Activated T-helper 1 cell treated with anti-CD3 and anti-CD28 coated beads, Interleukin-12 subunit alpha, Interleukin-12 subunit beta, Interleukin-2, Interleukin-4 antibody, amounts not matched to agents 30 ng/mL and 10 ng/mL and 1 ng/mL, durations not matched to agents 14 hours and 24 hours and 36 hours (primary cell): ENCODE measurements at regions of chr6 and their contacts with region 1.

Region 1: DNA sequence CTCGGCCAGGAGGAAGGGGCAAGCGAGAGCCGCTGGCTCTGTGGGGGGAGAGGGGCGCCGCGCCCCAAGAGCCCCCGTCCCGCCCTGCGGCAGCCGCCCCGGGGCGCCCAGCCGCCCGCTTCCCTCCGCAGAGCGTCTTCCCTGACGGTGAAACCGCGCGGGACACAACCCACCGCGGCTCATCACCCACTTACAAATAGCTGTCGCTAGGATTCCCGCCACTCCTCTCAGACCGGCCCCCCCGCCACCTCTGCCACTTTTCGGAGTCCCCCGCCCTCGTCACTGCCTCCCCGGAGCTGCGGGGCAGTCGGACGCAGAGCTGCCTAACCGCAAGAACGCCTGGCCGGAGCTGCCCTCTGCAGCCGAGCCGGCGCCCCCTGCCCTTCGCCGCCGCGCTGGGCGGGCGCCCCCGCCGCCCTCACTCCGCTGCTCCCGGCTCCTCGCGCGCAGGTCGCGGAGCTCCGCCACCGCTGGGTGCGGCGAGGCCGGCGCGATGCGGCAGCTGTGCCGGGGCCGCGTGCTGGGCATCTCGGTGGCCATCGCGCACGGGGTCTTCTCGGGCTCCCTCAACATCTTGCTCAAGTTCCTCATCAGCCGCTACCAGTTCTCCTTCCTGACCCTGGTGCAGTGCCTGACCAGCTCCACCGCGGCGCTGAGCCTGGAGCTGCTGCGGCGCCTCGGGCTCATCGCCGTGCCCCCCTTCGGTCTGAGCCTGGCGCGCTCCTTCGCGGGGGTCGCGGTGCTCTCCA is at the start of gene SLC35D3:
- DNase-seq: no peak
- H3K4me3 Mint-ChIP-seq: peak within 1 kb of the TSS; percentile 75
- H3K27ac Mint-ChIP-seq: no peak within 1 kb of the TSS
- H3K4me1 Mint-ChIP-seq: peaks cover 15% of the 10 kb centered on the region
- H3K27me3 Mint-ChIP-seq: peaks cover 62% of the 10 kb centered on the region
- total RNA-seq, gene SLC35D3: not detected in 2 replicates

Region 2: DNA sequence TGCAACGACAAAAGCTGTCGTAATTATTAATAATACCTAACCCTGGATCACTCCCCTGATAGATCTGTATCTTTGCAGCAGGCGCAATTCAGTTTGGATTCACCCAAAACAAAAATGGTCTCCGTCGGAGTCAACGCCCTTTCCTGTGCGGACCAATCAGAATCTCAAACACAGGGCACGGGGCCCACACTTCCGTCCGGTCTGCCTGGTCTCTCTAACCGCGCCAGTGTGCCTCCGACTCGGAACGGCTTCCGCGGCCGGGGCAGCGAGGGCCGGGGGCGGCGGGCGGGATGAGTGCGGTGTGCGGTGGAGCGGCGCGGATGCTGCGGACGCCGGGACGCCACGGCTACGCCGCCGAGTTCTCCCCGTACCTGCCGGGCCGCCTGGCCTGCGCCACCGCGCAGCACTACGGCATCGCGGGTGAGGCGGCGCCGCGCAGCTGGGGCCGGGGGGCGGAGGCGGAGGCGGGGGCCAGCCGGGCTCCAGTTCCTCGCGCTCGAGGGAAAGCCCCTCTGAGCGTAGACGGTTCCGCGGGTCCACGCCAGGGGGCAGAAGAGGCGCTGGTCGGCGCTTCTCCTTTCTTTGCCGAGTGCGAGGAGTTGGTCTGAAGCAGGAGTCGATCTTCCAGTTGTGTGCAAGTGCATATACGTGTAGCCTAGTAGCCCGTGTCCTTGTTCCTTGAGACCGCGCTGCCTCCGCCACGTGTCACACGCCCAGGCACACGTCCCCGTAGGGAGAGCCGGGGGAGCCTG is 99.6 kb before region 1 on chr6 and contains the start of gene PEX7:
- intact Hi-C with region 1: loop called (anchors 2 kb)
- DNase-seq: peak; percentile 85
- H3K4me3 Mint-ChIP-seq: peak within 1 kb of the TSS; percentile 91
- H3K27ac Mint-ChIP-seq: peak within 1 kb of the TSS; percentile 92
- H3K4me1 Mint-ChIP-seq: peaks cover 12% of the 10 kb centered on the region
- H3K27me3 Mint-ChIP-seq: peaks cover 6% of the 10 kb centered on the region
- total RNA-seq, gene PEX7: 3.7 and 4.2 TPM in 2 replicates

Region 3: GRCh38 chr6:136846046-136846445 is 76.1 kb before region 1 on chr6:
- intact Hi-C with region 1: loop called (anchors 2 kb)
- DNase-seq: no peak
- H3K4me3 Mint-ChIP-seq: no peak overlapping the region
- H3K27ac Mint-ChIP-seq: no peak overlapping the region
- H3K4me1 Mint-ChIP-seq: no peaks in the 10 kb centered on the region
- H3K27me3 Mint-ChIP-seq: no peaks in the 10 kb centered on the region

Region 4: GRCh38 chr6:136945711-136946121 is 23.6 kb after region 1 on chr6:
- intact Hi-C with region 1: no loop called
- DNase-seq: no peak
- H3K4me3 Mint-ChIP-seq: no peak overlapping the region
- H3K27ac Mint-ChIP-seq: no peak overlapping the region
- H3K4me1 Mint-ChIP-seq: no peaks in the 10 kb centered on the region
- H3K27me3 Mint-ChIP-seq: peaks cover 21% of the 10 kb centered on the region

Region 5: GRCh38 chr6:137489046-137490005 is 567.2 kb after region 1 on chr6:
- intact Hi-C with region 1: loop called (anchors 2 kb)
- DNase-seq: no peak
- H3K4me3 Mint-ChIP-seq: no peak overlapping the region
- H3K27ac Mint-ChIP-seq: peak overlapping the region; percentile 7
- H3K4me1 Mint-ChIP-seq: peaks cover 14% of the 10 kb centered on the region
- H3K27me3 Mint-ChIP-seq: peaks cover 85% of the 10 kb centered on the region